Activated CD8-positive, alpha-beta T cell treated with anti-CD3 and anti-CD28 coated beads, Interleukin-2, amount 10 ng/mL, durations not matched to agents 7 days and 5 days (primary cell): ENCODE measurements at regions of chr17 and their contacts with region 1.

Region 1: DNA sequence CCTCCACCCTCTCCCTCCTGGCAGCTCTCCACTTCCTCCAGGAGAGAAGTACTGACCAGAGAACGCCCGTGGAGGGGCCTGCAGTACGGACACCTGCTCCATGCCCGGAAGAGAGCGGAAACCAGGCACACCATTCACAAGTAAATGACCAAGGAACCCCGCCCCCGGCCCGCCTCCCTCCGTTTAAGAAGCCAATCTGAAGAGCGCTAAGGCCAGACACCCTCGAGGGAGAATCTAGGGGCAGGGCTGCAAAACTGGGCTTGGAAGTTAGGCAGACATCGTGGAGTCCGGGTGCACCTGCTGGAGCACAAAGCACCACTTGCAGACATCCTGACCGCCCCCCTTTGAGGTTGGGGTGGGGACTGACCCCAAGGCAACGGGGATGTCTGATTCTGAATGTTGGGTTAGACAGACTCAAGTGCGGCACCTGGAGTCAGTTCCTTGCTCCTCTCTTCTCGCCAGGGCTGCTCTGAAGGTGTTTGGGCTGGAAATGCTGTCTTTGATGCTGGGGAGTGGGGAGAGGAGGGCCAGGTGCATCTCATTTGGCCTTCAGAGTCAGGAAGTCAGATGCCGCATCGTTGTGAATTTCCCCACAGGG is 964 bp upstream of the FAAP100 start:
- DNase-seq: peak; percentile 90
- ATAC-seq: peak; percentile 77
- H3K4me3 Mint-ChIP-seq: peak overlapping the region; percentile 88
- H3K27ac Mint-ChIP-seq: peak overlapping the region; percentile 90
- H3K4me1 Mint-ChIP-seq: peaks cover 36% of the 10 kb centered on the region
- H3K27me3 Mint-ChIP-seq: no peaks in the 10 kb centered on the region

Region 2: GRCh38 chr17:81484195-81484979 is 68.7 kb before region 1 on chr17:
- CTCF ChIA-PET with region 1: interaction called, 10 read pairs
- POLR2A ChIA-PET with region 1: no interaction called
- DNase-seq: peak; percentile 90
- ATAC-seq: peak; percentile 76
- H3K4me3 Mint-ChIP-seq: no peak overlapping the region
- H3K27ac Mint-ChIP-seq: no peak overlapping the region
- H3K4me1 Mint-ChIP-seq: peaks cover 27% of the 10 kb centered on the region
- H3K27me3 Mint-ChIP-seq: peaks cover 32% of the 10 kb centered on the region

Region 3: DNA sequence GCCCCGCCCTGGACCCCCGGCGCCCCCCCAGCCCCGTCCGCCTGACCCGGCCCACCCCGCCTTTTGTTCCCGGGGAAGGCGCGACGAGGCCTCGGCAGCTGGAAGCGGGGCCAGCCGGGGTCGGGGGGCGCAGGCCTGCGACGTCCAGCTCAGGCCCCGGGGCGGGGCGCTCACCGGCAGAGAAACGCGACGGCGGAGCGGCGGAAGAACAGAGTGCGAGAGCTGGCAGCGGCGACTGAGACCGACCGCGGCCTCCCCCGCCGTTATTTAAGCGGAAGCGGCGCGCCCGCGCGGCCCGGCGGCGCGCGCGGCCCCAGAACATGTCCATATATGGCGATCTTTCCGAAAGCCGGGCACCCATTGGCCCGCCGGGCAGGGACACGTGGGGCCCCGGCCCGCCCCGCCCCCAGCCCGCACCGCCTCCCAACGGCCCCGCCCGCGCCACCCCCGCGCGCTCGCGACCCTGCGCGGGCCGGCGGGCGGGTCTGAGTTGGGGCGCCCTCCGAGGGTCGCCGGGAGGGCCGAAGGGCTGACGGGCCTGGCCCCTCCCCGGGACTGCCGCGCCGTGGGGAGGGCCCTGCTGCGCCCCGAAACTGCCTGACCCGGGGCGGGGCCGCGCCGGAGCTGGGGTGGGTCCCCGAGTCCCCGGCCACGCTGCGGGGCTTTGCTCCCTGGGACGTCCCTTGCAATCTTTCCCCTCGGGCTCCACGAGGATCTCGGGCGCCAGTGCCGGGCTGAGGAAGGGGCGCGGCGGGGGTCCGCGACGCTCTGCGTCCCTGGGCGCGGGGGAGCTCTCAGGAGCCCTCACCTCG is 40.4 kb before region 1 on chr17 and contains the start of gene ACTG1:
- CTCF ChIA-PET with region 1: interaction called, 14 read pairs
- POLR2A ChIA-PET with region 1: interaction called, 10 read pairs
- DNase-seq: peak; percentile 93
- ATAC-seq: peak; percentile 59
- H3K4me3 Mint-ChIP-seq: peak within 1 kb of the TSS; percentile 95
- H3K27ac Mint-ChIP-seq: peak within 1 kb of the TSS; percentile 96
- H3K4me1 Mint-ChIP-seq: peaks cover 32% of the 10 kb centered on the region
- H3K27me3 Mint-ChIP-seq: no peaks in the 10 kb centered on the region
- total RNA-seq, gene ACTG1: 5,147 to 5,318 TPM

Region 4: GRCh38 chr17:81519284-81519955 is 33.7 kb before region 1 on chr17:
- CTCF ChIA-PET with region 1: interaction called, 14 read pairs
- POLR2A ChIA-PET with region 1: interaction called, 8 read pairs
- DNase-seq: peak; percentile 68
- ATAC-seq: peak; percentile 47
- H3K4me3 Mint-ChIP-seq: peak overlapping the region; percentile 65
- H3K27ac Mint-ChIP-seq: no peak overlapping the region
- H3K4me1 Mint-ChIP-seq: peaks cover 28% of the 10 kb centered on the region
- H3K27me3 Mint-ChIP-seq: peaks cover 15% of the 10 kb centered on the region

Region 5: GRCh38 chr17:81601525-81602120 is 48.5 kb after region 1 on chr17:
- CTCF ChIA-PET with region 1: interaction called, 18 read pairs
- POLR2A ChIA-PET with region 1: no interaction called
- DNase-seq: peak; percentile 69
- ATAC-seq: peak; percentile 90
- H3K4me3 Mint-ChIP-seq: no peak overlapping the region
- H3K27ac Mint-ChIP-seq: peak overlapping the region; percentile 58
- H3K4me1 Mint-ChIP-seq: peaks cover 10% of the 10 kb centered on the region
- H3K27me3 Mint-ChIP-seq: no peaks in the 10 kb centered on the region